IMR-90 (cell line): ENCODE measurements at regions of chr2 and their contacts with region 1.

Region 1: GRCh38 chr2:180705122-180705521 is 275.3 kb upstream of the UBE2E3 start:
- DNase-seq: peak; percentile 72
- ATAC-seq: peak; percentile 49
- H3K4me3 ChIP-seq: no peak overlapping the region
- H3K27ac ChIP-seq: no peak overlapping the region
- H3K4me1 ChIP-seq: peaks cover 8% of the 10 kb centered on the region
- H3K27me3 ChIP-seq: no peaks in the 10 kb centered on the region
- CTCF ChIP-seq: no peak
- POLR2A ChIP-seq: no peak
- RAD21 ChIP-seq: no peak

Region 2: GRCh38 chr2:180728928-180729559 is 23.9 kb after region 1 on chr2:
- CTCF ChIA-PET with region 1: no interaction called
- POLR2A ChIA-PET with region 1: no interaction called
- dilution Hi-C with region 1: no loop called
- in situ Hi-C with region 1: no loop called
- intact Hi-C with region 1: loop called (anchors 2 kb)
- DNase-seq: peak; percentile 94
- ATAC-seq: peak; percentile 92
- H3K4me3 ChIP-seq: peak overlapping the region; percentile 39; the same call in 1 of the 2 replicates
- H3K27ac ChIP-seq: peak overlapping the region; percentile 30; the same call in 1 of the 2 replicates
- H3K4me1 ChIP-seq: peaks cover 3% of the 10 kb centered on the region; the same call in 1 of the 2 replicates
- H3K27me3 ChIP-seq: no peaks in the 10 kb centered on the region
- CTCF ChIP-seq: no peak
- POLR2A ChIP-seq: no peak
- RAD21 ChIP-seq: no peak

Region 3: DNA sequence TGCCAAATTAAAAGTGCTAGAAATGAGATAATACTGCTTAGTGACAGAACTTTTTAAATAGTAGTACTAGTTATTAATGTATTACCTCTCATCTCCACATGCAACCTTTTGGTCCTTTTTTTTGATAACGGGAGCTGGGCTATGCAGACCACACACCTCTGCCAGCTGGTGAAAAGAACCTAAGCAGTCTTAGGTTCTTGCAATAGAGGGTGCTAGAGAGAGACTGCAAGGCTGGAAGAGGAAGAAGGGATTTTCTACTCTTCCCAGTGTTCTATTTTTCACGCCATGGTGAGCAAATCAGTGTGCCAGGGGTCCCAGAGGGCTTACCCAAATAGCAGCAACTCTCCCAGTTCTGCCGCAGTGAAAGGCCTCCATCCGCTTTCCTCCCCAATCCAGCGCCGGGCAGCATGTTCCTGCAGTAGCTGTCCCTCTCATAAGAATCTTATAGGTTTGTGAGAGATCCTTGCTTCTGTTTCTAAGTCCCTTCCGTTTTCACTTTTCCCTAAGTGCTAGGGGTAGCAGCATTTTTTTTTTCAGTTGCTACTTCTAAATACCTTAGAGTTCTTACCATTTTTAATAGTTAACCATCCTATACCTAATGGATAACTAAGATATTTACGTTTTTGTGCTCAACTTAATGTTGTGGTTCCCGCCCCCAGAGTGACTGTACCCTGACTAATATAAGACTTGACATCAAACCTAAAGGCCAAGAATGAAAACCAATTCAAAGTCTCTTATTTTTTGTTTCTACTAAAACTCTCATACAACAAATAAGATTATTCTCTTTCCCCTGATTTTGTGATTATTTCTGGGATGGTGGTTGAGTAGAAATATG is 205.9 kb after region 1 on chr2:
- CTCF ChIA-PET with region 1: no interaction called
- POLR2A ChIA-PET with region 1: no interaction called
- dilution Hi-C with region 1: no loop called
- in situ Hi-C with region 1: no loop called
- intact Hi-C with region 1: no loop called
- DNase-seq: peak; percentile 39
- ATAC-seq: no peak
- H3K4me3 ChIP-seq: no peak overlapping the region
- H3K27ac ChIP-seq: no peak overlapping the region
- H3K4me1 ChIP-seq: peaks cover 2% of the 10 kb centered on the region; the same call in 1 of the 2 replicates
- H3K27me3 ChIP-seq: no peaks in the 10 kb centered on the region
- CTCF ChIP-seq: no peak
- POLR2A ChIP-seq: no peak
- RAD21 ChIP-seq: no peak